ENCODE measurements at regions of chr1 and their contacts with region 1.

Region 1: DNA sequence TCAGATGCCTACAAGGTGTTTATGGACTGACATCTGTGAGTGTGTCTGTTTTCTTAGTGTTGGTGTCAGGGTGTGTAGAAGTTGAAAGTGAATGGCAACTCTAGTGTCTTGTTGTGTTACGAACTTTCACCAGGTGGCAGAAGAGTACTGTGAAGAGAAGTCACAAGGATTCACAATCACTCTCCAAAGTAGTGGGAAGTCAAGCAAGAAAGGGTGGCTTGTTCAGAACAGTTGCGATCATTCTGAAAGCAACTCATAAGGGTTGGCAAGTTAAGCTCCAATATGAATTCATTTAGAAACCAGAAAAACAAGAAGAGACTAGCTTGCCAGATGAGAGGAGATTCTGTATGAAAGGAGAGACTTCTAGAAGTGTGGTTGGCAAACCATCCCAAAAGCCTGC is 86.1 kb downstream of the FASLG start:
- DNase-seq: peak in 6 of 9 experiments; percentile 25 to 79 (median 27)
- ATAC-seq: peak; percentile 62
- H3K4me3 ChIP-seq: no peak overlapping the region
- H3K4me3 Mint-ChIP-seq: no peak overlapping the region
- H3K27ac ChIP-seq: no peak overlapping the region
- H3K27ac Mint-ChIP-seq: peak overlapping the region; percentile 16
- H3K4me1 ChIP-seq: peaks cover 32% of the 10 kb centered on the region
- H3K4me1 Mint-ChIP-seq: peaks cover 45% of the 10 kb centered on the region
- H3K27me3 ChIP-seq: peaks cover 0 to 3% of the 10 kb centered on the region in 2 experiments
- H3K27me3 Mint-ChIP-seq: peaks cover 7% of the 10 kb centered on the region
- CTCF ChIP-seq: peak; percentile 78

Region 2: DNA sequence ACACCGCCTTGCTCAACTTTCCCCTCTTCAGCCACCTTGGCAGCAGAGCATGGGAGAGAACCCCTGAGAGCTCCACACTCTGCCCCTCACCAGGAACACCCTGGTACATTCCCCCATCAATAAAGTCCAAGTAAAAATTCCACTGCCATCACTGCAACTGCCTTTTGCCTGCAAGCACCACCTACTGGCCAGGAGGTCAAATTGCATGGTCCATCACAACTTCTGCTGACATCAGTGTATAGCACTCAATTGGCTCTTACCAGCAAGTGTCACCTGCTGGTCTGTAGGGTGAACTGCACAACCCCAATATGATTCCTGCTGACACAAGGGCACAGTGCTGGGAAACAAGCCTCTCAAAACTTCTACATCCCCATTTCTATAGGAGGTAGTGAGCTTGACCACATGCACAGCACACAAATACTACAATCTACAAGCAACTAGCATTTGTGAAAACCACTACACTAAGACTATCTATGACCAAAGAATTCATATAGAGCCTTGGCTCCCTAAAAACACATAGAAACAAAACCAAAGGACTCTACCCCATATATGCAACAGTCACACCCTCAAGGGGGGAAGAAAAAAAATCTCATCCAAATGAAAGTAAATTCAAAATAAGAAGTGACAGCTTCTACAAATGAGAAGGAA is 16.9 kb before region 1 on chr1:
- CTCF ChIA-PET with region 1: interaction called, 50 read pairs
- POLR2A ChIA-PET with region 1: no interaction called
- intact Hi-C with region 1: no loop called
- DNase-seq: peak in 4 of 9 experiments; percentile 25 to 77 (median 55)
- ATAC-seq: peak; percentile 99
- H3K4me3 ChIP-seq: no peak overlapping the region
- H3K4me3 Mint-ChIP-seq: no peak overlapping the region
- H3K27ac ChIP-seq: no peak overlapping the region
- H3K27ac Mint-ChIP-seq: no peak overlapping the region
- H3K4me1 ChIP-seq: no peaks in the 10 kb centered on the region
- H3K4me1 Mint-ChIP-seq: peaks cover 23% of the 10 kb centered on the region
- H3K27me3 ChIP-seq: no peaks in the 10 kb centered on the region
- H3K27me3 Mint-ChIP-seq: no peaks in the 10 kb centered on the region
- CTCF ChIP-seq: peak; percentile 57

Region 3: DNA sequence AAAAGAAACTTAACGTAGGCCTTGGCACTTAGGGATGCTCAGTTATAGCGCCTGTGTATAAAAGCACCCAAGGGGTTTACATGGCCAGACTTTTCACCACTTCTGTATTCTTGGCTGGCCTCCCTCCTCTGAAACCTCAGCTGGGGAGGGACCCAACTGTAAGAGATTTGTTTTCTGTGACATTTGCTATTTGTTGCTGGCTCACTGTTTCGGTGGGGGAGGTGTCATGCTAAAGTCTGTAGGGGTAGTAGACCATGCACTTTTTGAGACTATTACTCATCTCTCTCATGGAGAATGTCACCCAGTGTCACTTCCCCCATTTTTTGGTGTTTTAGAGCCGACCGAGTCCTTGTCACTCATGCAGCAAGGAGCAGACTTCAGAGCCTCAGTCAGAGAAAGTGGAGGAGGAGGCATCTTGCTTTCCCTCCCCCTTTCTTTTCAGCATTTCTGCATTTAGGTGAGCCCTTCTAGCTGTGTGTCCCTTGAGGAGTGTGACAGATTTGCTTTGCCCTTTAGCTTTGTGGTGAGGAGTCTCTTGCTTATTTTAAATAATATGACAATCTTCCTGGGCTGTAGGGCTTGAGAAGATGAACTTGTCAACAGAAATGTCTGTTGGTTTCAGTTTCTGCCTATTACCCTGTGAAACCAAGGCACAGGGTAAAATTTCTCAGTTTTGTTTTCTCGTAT is 74.0 kb after region 1 on chr1:
- CTCF ChIA-PET with region 1: interaction called, 10 read pairs
- POLR2A ChIA-PET with region 1: no interaction called
- intact Hi-C with region 1: no loop called
- DNase-seq: peak in 5 of 9 experiments; percentile 8 to 52 (median 36)
- ATAC-seq: peak; percentile 80
- H3K4me3 ChIP-seq: peak overlapping the region in 1 of 2 experiments; percentile 14
- H3K4me3 Mint-ChIP-seq: peak overlapping the region; percentile 74
- H3K27ac ChIP-seq: peak overlapping the region; percentile 8 to 74
- H3K27ac Mint-ChIP-seq: peak overlapping the region; percentile 87
- H3K4me1 ChIP-seq: peaks cover 16% of the 10 kb centered on the region
- H3K4me1 Mint-ChIP-seq: peaks cover 31% of the 10 kb centered on the region
- H3K27me3 ChIP-seq: no peaks in the 10 kb centered on the region
- H3K27me3 Mint-ChIP-seq: no peaks in the 10 kb centered on the region
- CTCF ChIP-seq: no peak

Region 4: GRCh38 chr1:173212952-173213491 is 468.0 kb after region 1 on chr1:
- CTCF ChIA-PET with region 1: interaction called, 10 read pairs
- POLR2A ChIA-PET with region 1: no interaction called
- intact Hi-C with region 1: no loop called
- DNase-seq: no peak
- ATAC-seq: no peak
- H3K4me3 ChIP-seq: no peak overlapping the region
- H3K4me3 Mint-ChIP-seq: no peak overlapping the region
- H3K27ac ChIP-seq: no peak overlapping the region
- H3K27ac Mint-ChIP-seq: no peak overlapping the region
- H3K4me1 ChIP-seq: no peaks in the 10 kb centered on the region
- H3K4me1 Mint-ChIP-seq: peaks cover 7% of the 10 kb centered on the region
- H3K27me3 ChIP-seq: no peaks in the 10 kb centered on the region
- H3K27me3 Mint-ChIP-seq: no peaks in the 10 kb centered on the region
- CTCF ChIP-seq: no peak

Region 5: GRCh38 chr1:173628888-173629287 is 883.9 kb after region 1 on chr1:
- CTCF ChIA-PET with region 1: no interaction called
- POLR2A ChIA-PET with region 1: no interaction called
- intact Hi-C with region 1: loop called in 1 of 2 experiments (anchors 2 kb)
- DNase-seq: peak in 2 of 9 experiments; percentile 19 to 43
- ATAC-seq: no peak
- H3K4me3 ChIP-seq: no peak overlapping the region
- H3K4me3 Mint-ChIP-seq: no peak overlapping the region
- H3K27ac ChIP-seq: no peak overlapping the region
- H3K27ac Mint-ChIP-seq: no peak overlapping the region
- H3K4me1 ChIP-seq: no peaks in the 10 kb centered on the region
- H3K4me1 Mint-ChIP-seq: no peaks in the 10 kb centered on the region
- H3K27me3 ChIP-seq: no peaks in the 10 kb centered on the region
- H3K27me3 Mint-ChIP-seq: no peaks in the 10 kb centered on the region
- CTCF ChIP-seq: no peak

Region 6: DNA sequence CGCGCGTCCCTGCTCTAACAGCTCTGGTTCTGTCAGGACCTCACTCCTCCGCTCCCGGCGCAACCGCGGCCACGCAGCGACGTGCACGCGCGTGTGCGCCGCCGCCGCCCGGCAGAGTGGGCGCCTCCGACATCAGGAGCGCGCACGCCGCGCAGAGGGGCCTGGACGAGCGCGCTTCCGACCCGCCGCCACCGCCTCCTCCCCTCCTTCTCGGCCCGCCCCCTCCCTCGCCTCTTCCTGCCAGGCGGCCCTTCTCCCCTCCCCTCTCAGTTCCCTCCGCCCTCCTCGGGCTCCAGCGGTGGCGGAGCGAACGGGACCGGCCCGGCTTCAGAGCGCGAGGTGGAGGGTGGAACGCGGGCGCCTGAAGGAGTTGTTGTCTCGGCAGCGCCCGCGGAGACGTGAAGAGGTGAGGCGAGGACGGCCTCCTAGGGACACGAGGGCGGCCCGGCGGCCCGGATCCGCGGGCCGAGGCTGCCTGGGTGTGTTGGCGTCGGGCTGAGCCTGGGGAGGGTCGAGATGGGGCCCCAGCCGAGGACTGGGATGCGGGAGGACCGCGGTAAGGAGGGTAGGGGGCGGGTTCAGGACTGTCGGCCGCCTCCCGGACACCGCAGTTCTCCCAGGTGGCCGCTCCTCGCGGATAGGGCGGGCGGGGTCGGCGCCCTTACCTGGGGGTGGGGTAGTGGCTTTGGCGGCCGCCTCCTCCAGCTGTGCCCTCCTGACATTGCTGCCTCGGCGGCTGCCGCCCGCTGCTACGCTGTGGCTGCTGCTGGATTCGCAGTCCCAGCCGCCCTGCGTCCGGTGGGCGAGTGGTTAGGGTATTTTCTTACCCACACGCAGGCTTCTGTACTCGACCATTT is 1414.5 kb after region 1 on chr1 and contains the start of gene RABGAP1L:
- CTCF ChIA-PET with region 1: no interaction called
- POLR2A ChIA-PET with region 1: no interaction called
- intact Hi-C with region 1: loop called in 1 of 2 experiments (anchors 10 kb)
- DNase-seq: peak; percentile 90 to 98 (median 93)
- ATAC-seq: peak; percentile 90
- H3K4me3 ChIP-seq: peak within 1 kb of the TSS; percentile 73 to 74
- H3K4me3 Mint-ChIP-seq: peak within 1 kb of the TSS; percentile 91
- H3K27ac ChIP-seq: peak within 1 kb of the TSS; percentile 73 to 93
- H3K27ac Mint-ChIP-seq: peak within 1 kb of the TSS; percentile 96
- H3K4me1 ChIP-seq: peaks cover 16% of the 10 kb centered on the region
- H3K4me1 Mint-ChIP-seq: peaks cover 53% of the 10 kb centered on the region
- H3K27me3 ChIP-seq: no peaks in the 10 kb centered on the region
- H3K27me3 Mint-ChIP-seq: no peaks in the 10 kb centered on the region
- CTCF ChIP-seq: no peak
- total RNA-seq, gene RABGAP1L: 60.7 to 65.1 TPM

Measured in CD8-positive, alpha-beta T cell (primary cell).